Ascending aorta (tissue), 2 donors: ENCODE measurements at regions of chr7 and their contacts with region 1.

Region 1: GRCh38 chr7:18666107-18666728 is 170.7 kb downstream of the HDAC9 start:
- DNase-seq: peak; percentile 11 to 87
- H3K4me3 ChIP-seq: no peak overlapping the region
- H3K27ac ChIP-seq: no peak overlapping the region
- H3K4me1 ChIP-seq: peaks cover 0 to 15% of the 10 kb centered on the region in 2 donors
- H3K27me3 ChIP-seq: no peaks in the 10 kb centered on the region
- CTCF ChIP-seq: peak; percentile 65 to 95 (median 92)

Region 2: DNA sequence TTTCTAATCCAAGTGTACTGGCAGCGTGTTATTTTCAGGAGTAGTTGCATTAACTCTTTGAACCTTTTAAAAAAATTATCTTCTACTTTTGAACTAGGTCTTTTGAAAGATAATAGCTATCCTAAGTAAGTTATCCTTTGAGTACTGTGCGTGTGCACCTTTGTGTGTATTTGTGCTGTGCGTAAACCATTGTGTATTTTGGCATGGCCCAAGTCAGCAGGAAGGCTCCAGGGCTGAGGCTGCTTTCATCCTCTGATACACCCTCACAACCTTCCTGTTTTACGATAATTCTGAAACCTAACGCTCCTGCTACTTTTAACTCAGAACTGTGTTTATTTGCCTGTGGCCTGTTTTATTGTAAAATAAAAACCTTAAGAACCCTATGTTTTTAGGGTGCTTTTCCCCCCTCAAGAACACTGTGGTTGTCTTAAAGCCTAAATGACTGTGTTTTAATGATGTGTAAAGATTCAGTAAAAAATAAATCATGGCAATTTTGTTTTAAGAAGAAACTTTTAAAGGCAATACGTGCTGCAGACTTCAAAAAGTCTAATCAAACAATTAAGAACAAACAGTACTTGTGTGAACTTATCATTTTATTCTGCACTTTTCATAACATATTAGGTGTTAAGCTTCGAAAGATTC is 113.2 kb before region 1 on chr7:
- intact Hi-C with region 1: no loop called
- DNase-seq: no peak
- H3K4me3 ChIP-seq: peak overlapping the region in 1 of 2 donors; percentile 7
- H3K27ac ChIP-seq: peak overlapping the region; percentile 47 to 64
- H3K4me1 ChIP-seq: peaks cover 0 to 44% of the 10 kb centered on the region in 2 donors
- H3K27me3 ChIP-seq: no peaks in the 10 kb centered on the region
- CTCF ChIP-seq: no peak

Region 3: GRCh38 chr7:18590744-18591340 is 75.4 kb before region 1 on chr7:
- intact Hi-C with region 1: loop called (anchors 2 kb)
- DNase-seq: no peak
- H3K4me3 ChIP-seq: no peak overlapping the region
- H3K27ac ChIP-seq: no peak overlapping the region
- H3K4me1 ChIP-seq: no peaks in the 10 kb centered on the region
- H3K27me3 ChIP-seq: no peaks in the 10 kb centered on the region
- CTCF ChIP-seq: peak; percentile 23 to 66 (median 46)

Region 4: GRCh38 chr7:18626717-18627116 is 39.5 kb before region 1 on chr7:
- intact Hi-C with region 1: loop called (anchors 5 kb)
- DNase-seq: no peak
- H3K4me3 ChIP-seq: no peak overlapping the region
- H3K27ac ChIP-seq: peak overlapping the region in 1 of 2 donors; percentile 14
- H3K4me1 ChIP-seq: peaks cover 0 to 5% of the 10 kb centered on the region in 2 donors
- H3K27me3 ChIP-seq: no peaks in the 10 kb centered on the region
- CTCF ChIP-seq: no peak

Region 5: GRCh38 chr7:18724318-18724717 is 58.1 kb after region 1 on chr7:
- intact Hi-C with region 1: no loop called
- DNase-seq: no peak
- H3K4me3 ChIP-seq: no peak overlapping the region
- H3K27ac ChIP-seq: no peak overlapping the region
- H3K4me1 ChIP-seq: no peaks in the 10 kb centered on the region
- H3K27me3 ChIP-seq: no peaks in the 10 kb centered on the region
- CTCF ChIP-seq: no peak